ENCODE measurements at regions of chr5 and their contacts with region 1.

Region 1: DNA sequence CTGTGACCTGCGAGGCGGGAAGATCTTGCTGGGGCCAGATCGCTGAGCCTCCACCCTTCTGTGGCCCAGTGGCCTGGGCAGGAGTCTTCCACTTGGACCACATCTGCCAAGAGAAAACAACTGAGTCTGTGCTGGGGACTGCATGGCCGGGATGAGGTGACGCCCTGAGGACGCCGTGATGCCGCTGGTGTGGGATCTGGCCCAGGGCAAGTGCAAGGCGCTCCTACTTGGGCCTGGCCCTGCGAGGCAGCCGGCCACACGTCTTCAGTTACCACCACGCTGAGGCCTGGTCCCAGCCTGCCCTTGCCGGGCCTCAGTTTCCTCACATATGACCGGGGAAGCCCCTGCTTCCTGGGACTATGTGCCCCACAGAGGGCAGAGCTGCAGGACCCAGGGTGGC is 133.4 kb downstream of the SLC25A46 start:
- DNase-seq: no peak
- ATAC-seq: no peak
- H3K4me3 ChIP-seq: no peak overlapping the region
- H3K27ac ChIP-seq: no peak overlapping the region
- H3K4me1 ChIP-seq: no peaks in the 10 kb centered on the region
- H3K27me3 ChIP-seq: no peaks in the 10 kb centered on the region
- CTCF ChIP-seq: no peak

Region 2: GRCh38 chr5:110702704-110703103 is 169.5 kb before region 1 on chr5:
- intact Hi-C with region 1: no loop called
- DNase-seq: no peak
- ATAC-seq: no peak
- H3K4me3 ChIP-seq: no peak overlapping the region
- H3K27ac ChIP-seq: no peak overlapping the region
- H3K4me1 ChIP-seq: peaks cover 0 to 4% (median 0%) of the 10 kb centered on the region in 9 donors
- H3K27me3 ChIP-seq: no peaks in the 10 kb centered on the region
- CTCF ChIP-seq: no peak

Region 3: GRCh38 chr5:110757118-110757729 is 115.0 kb before region 1 on chr5:
- intact Hi-C with region 1: no loop called
- DNase-seq: peak in 1 of 2 donors; percentile 6
- ATAC-seq: no peak
- H3K4me3 ChIP-seq: no peak overlapping the region
- H3K27ac ChIP-seq: no peak overlapping the region
- H3K4me1 ChIP-seq: no peaks in the 10 kb centered on the region
- H3K27me3 ChIP-seq: no peaks in the 10 kb centered on the region
- CTCF ChIP-seq: peak; percentile 51 to 78 (median 74)

Region 4: DNA sequence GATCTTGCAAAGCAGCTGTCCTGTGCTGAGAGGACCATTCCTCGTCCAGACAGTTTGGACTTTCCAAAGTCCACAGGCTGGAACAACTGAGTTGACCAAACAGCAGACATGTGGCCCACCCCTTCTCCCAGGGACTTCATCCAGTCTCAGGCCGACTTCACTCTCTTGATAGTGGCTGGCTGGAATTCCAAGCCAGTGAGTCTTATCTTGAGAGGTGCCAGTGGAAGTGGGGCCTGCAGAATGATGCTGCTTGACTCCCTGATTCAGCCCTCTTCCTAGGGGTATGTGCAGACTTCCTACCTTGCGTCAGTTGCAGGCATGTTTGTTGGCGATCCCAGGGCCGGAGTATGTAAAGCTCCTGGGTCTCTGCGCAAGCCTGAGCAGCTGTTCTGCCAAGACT is 67.9 kb after region 1 on chr5:
- intact Hi-C with region 1: no loop called
- DNase-seq: no peak
- ATAC-seq: no peak
- H3K4me3 ChIP-seq: no peak overlapping the region
- H3K27ac ChIP-seq: no peak overlapping the region
- H3K4me1 ChIP-seq: no peaks in the 10 kb centered on the region
- H3K27me3 ChIP-seq: no peaks in the 10 kb centered on the region
- CTCF ChIP-seq: no peak

Region 5: DNA sequence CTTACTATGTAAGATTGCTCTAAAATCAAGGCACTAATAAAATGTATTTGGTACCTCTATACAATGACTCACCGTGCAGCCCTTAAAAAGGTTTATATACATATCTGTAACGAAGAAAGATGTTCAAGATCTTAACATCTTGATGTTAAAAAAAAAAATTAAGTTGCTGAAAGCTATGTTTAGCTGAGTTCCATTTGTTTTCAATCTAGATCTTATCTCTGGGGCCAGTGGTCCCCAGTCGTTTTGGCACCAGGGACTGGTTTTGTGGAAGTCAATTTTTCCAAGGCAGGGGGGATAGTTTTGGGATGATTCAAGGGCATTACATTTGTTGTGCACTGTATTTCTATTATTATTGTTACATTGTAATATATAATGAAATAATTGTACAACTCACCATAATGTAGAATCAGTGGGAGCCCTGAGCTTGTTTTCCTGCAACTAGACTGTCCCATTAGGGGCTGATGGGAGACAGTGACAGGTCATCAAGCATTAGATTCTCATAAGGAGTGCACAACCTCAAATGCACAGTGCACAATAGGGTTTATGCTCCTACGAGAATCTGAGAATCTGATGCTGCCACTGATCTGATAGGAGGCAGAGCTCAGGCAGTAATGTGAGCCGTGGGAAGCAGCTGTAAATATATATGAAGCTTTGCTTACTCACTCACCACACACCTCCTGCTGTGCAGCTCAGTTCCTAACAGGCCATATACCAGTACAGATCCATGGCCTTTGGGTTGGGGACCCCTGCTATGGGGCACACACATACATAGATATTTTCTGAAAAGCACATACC is 171.7 kb after region 1 on chr5:
- intact Hi-C with region 1: loop called in 1 of 10 experiments (anchors 10 kb)
- DNase-seq: no peak
- ATAC-seq: no peak
- H3K4me3 ChIP-seq: no peak overlapping the region
- H3K27ac ChIP-seq: no peak overlapping the region
- H3K4me1 ChIP-seq: no peaks in the 10 kb centered on the region
- H3K27me3 ChIP-seq: no peaks in the 10 kb centered on the region
- CTCF ChIP-seq: no peak